Tibial artery (tissue), 4 donors: ENCODE measurements at regions of chr2 and their contacts with region 1.

Region 1: DNA sequence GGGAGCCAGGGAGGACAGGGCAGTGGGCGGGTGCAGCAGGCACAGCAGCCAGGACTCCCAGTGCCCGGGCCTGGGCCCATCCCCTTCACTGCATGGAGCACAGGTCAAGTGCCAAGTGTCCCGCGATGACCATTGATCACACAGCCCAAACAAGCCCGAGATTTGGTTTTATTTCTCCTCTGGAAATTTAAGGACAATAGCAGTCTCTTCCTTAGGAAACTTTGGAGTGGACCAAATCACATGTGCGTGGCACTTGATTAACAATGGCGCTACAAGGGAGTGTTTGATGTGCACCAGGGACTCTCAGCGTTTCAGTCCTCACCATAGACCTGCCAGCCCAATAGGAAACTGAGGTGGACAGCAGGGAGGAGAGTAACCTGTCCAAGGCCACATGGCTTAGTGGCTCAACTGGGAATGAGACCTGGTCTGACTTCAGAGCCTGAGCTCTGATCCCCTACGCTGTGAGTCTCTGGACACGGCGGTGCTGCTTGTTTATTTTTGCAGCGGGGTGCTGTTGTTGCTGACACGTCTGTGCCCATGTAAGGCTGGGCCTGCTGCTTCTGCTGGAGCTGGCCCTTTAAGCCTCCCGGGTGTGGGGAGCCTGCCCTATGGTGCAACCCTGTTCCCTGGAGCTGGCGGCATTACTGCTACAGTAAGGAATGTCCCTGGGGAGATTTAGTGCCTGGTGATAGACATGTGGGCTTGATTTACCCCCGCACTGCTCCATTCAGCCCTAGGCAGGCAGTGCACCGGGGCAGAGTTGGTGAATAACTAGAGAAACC is 194.2 kb downstream of the INHBB start:
- DNase-seq: peak; percentile 89 to 97
- H3K4me3 ChIP-seq: peak overlapping the region in 1 of 2 donors; percentile 12
- H3K27ac ChIP-seq: peak overlapping the region; percentile 73 to 83
- H3K4me1 ChIP-seq: peaks cover 0 to 27% (median 25%) of the 10 kb centered on the region in 4 donors
- H3K27me3 ChIP-seq: no peaks in the 10 kb centered on the region
- CTCF ChIP-seq: no peak

Region 2: GRCh38 chr2:120436885-120437603 is 103.1 kb before region 1 on chr2:
- intact Hi-C with region 1: loop called (anchors 10 kb)
- DNase-seq: no peak
- H3K4me3 ChIP-seq: no peak overlapping the region
- H3K27ac ChIP-seq: no peak overlapping the region
- H3K4me1 ChIP-seq: peaks cover 5 to 9% (median 6%) of the 10 kb centered on the region in 4 donors
- H3K27me3 ChIP-seq: peaks cover 0 to 33% of the 10 kb centered on the region in 2 donors
- CTCF ChIP-seq: no peak

Region 3: GRCh38 chr2:120802158-120802557 is 262.0 kb after region 1 on chr2:
- intact Hi-C with region 1: no loop called
- DNase-seq: peak in 1 of 2 donors; percentile 40
- H3K4me3 ChIP-seq: no peak overlapping the region
- H3K27ac ChIP-seq: peak overlapping the region; percentile 58 to 68
- H3K4me1 ChIP-seq: peaks cover 0 to 71% (median 57%) of the 10 kb centered on the region in 4 donors
- H3K27me3 ChIP-seq: no peaks in the 10 kb centered on the region
- CTCF ChIP-seq: peak in 1 of 2 experiments; percentile 20